PC-3 (cell line): ENCODE measurements at regions of chr15 and their contacts with region 1.

Region 1: DNA sequence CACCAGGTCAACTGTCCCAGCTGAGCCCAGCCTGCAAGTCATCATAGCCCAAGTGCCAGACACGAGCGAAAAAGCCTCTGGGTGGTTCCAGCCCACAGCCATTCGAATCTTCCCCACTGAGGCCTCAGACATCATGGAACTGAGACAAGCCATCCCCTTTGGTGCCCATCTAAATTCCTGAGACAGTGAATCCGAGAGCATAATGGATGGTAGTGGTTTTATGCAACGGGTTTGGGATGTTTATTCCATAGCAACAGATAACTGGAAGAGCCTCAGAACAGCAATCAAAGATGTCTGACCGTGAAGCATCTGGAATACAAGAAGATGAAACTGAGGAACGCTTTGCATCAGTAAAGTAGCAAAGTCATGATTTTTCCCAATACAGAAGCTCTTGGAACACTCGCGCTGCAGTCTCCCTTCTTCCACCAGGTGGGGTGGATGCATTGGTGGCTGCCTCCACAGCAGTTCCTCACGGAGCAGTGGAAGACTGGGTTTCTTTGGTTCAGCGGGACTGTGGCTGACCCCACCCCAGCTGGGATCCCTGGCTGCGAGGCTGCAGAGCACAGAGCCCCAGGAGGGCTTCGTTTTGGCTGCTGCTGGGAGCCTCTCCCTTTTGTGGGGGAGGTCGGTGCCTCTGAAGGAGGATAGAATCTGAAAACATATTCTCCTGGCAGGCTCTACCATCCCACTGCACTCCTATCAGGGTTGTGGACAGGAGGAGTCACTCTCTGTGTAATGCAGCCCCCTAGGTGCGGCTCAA is 26.4 kb upstream of the PDE8A start:
- DNase-seq: peak; percentile 76
- ATAC-seq: peak; percentile 98
- H3K4me3 ChIP-seq: peak overlapping the region; percentile 48
- H3K27ac ChIP-seq: no peak overlapping the region
- H3K4me1 ChIP-seq: peaks cover 14% of the 10 kb centered on the region
- H3K27me3 ChIP-seq: no peaks in the 10 kb centered on the region
- CTCF ChIP-seq: peak; percentile 85

Region 2: GRCh38 chr15:84669726-84670125 is 285.5 kb before region 1 on chr15:
- CTCF ChIA-PET with region 1: no interaction called
- POLR2A ChIA-PET with region 1: no interaction called
- intact Hi-C with region 1: no loop called
- DNase-seq: no peak
- ATAC-seq: no peak
- H3K4me3 ChIP-seq: no peak overlapping the region
- H3K27ac ChIP-seq: peak overlapping the region; percentile 42
- H3K4me1 ChIP-seq: peaks cover 13% of the 10 kb centered on the region
- H3K27me3 ChIP-seq: no peaks in the 10 kb centered on the region
- CTCF ChIP-seq: no peak

Region 3: GRCh38 chr15:84967380-84967779 is 12.1 kb after region 1 on chr15:
- CTCF ChIA-PET with region 1: no interaction called
- POLR2A ChIA-PET with region 1: no interaction called
- intact Hi-C with region 1: no loop called
- DNase-seq: no peak
- ATAC-seq: no peak
- H3K4me3 ChIP-seq: no peak overlapping the region
- H3K27ac ChIP-seq: no peak overlapping the region
- H3K4me1 ChIP-seq: peaks cover 11% of the 10 kb centered on the region
- H3K27me3 ChIP-seq: no peaks in the 10 kb centered on the region
- CTCF ChIP-seq: no peak

Region 4: DNA sequence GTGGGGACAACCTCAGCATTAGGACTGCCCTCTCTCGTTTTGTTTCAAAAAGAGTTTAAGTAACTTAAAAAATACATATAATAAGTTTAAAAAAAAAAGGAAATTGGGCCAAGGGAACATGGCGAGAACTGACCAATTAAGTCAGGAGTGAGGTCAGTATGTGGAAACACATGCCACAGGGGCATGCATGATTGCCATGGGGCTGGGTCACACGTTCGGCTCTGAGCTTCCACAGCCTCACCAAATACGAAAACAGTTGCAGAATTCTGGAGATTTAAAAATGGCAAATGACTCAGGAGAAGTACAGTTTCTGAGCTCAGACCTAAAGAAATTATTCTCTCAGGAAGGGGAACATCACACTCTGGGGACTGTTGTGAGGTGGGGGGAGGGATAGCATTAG is 50.5 kb after region 1 on chr15:
- CTCF ChIA-PET with region 1: interaction called, 3 read pairs
- POLR2A ChIA-PET with region 1: no interaction called
- intact Hi-C with region 1: loop called (anchors 2 kb)
- DNase-seq: no peak
- ATAC-seq: no peak
- H3K4me3 ChIP-seq: no peak overlapping the region
- H3K27ac ChIP-seq: no peak overlapping the region
- H3K4me1 ChIP-seq: no peaks in the 10 kb centered on the region
- H3K27me3 ChIP-seq: no peaks in the 10 kb centered on the region
- CTCF ChIP-seq: no peak